ENCODE measurements at regions of chr17 and their contacts with region 1.

Region 1: DNA sequence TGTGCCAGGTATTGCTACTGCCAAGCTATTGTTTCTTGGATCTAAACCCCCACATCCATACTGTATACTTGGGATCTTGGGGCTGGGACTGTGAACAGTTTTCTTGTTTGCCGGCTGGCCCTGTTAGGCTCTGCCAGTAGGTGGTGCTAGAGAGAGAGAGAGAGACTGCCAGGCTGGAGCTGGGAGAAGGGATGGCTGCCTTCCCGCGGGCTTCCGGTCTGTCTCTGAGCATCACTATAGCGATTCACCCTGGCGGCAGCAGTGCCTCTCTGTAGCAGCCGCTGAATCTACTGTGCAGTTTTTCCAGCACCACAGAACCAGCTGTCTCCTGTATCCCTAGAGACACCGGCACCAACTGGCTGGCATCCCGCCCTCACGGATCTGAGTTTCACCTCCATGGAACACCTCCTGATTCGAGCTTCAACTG is 201.2 kb downstream of the UTP18 start:
- DNase-seq: peak; percentile 48
- CTCF ChIP-seq: peak; percentile 81

Region 2: GRCh38 chr17:51435641-51436091 is 25.9 kb before region 1 on chr17:
- CTCF ChIA-PET with region 1: interaction called, 21 read pairs
- POLR2A ChIA-PET with region 1: no interaction called
- DNase-seq: peak; percentile 21
- CTCF ChIP-seq: peak; percentile 46

Region 3: DNA sequence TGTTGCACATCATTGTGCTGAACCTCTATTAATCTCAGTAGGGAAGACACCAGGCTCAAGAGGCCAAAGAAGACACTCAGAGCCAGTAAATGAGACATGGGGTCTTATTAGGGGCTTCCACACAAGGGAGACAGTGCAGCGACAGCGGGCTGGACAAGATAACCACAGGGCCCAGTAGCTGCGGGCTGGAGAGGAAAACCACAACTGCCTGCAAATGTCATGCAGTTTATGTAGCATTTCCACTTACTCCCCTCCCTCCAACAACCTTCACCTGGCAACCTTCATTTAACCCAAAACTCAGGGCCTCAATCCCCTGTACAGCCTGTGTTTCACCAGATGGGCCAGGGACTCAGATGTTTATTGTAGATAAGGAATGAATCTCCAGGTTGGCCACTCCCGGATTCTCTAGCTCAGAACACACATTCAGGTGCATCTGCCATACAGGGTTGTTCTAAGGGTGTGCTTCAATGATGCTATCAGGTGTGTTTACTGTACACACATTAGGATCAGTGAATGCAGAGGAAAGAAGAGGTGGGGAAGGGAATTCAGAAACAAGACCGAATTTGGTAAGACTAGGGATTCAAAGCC is 15.6 kb before region 1 on chr17:
- CTCF ChIA-PET with region 1: interaction called, 21 read pairs
- POLR2A ChIA-PET with region 1: no interaction called
- DNase-seq: no peak
- CTCF ChIP-seq: no peak

Region 4: GRCh38 chr17:51472670-51473205 is 11.1 kb after region 1 on chr17:
- CTCF ChIA-PET with region 1: interaction called, 27 read pairs
- POLR2A ChIA-PET with region 1: no interaction called
- DNase-seq: no peak
- CTCF ChIP-seq: no peak